CD8-positive, alpha-beta T cell (primary cell): ENCODE measurements at regions of chr6 and their contacts with region 1.

Region 1: DNA sequence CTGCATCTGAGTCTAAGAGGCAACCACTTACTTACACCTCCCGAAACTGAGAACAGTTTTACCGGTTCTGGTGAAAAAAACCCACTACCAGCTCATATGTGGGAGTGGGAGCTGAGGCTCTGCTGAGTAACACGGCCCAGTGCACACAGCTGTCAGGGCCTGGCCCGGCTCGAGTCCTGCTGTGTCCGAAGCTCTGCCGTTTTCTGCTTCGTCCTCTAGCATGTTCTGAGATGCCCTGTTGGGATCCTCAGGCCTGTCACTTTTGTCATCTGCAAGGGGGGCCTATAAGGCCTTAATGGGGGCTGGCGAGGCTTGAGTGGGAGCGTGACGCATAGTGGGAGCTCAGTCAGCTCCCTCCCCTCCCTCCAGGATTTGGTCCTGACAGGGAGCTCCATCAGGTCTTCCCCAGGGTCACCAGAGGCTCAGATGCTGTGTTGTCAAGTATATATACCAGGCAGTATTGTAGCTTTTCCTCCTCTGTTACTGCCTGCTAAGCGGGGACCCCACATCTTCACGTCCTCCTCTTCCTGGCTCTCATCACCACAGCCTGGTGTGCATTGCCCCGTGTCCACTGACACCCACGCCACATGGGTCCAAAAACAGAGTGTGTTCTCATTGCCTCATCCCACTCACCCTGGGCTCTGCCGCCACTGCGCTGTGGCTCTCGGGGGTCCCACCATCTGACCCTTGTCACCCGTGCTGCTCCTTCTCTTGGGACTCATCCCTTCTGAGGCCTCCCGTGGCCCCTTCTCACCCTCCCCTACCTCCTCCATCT is 45.2 kb upstream of the FANCE start:
- DNase-seq: no peak
- ATAC-seq: no peak
- H3K4me3 ChIP-seq: no peak overlapping the region
- H3K4me3 Mint-ChIP-seq: no peak overlapping the region
- H3K27ac ChIP-seq: no peak overlapping the region
- H3K27ac Mint-ChIP-seq: peak overlapping the region; percentile 57
- H3K4me1 ChIP-seq: peaks cover 20% of the 10 kb centered on the region
- H3K4me1 Mint-ChIP-seq: peaks cover 36% of the 10 kb centered on the region
- H3K27me3 ChIP-seq: no peaks in the 10 kb centered on the region
- H3K27me3 Mint-ChIP-seq: no peaks in the 10 kb centered on the region
- CTCF ChIP-seq: no peak

Region 2: DNA sequence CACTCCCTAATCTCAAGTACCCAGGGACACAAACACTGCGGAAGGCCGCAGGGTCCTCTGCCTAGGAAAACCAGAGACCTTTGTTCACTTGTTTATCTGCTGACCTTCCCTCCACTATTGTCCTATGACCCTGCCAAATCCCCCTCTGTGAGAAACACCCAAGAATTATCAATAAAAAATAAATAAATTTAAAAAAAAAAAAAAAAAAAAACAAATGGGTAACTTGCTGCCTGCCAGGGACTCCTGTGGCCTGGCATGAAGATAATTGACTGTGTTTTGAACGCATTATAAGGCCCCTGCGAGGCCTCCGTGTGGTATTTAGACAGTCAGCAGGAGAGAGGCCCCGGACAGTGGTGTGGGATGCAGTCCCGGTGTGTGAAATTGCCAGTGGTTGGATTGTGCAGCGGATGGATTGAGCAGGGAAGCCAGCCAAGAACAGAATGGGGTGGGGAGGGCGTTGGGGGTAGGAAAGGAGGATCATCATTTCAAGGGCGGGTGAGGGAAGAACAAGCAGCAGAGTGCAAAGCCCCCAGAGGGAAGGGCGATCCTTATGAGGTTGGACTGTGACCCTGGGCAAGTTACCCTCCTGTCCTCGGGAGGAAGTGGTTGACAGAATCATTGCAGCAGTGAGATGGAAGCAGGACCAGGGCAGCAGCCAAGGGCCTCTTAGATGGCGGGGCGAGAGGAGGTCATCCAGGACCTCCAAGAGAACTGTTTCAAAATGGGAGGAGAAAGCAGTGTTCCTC is 21.3 kb before region 1 on chr6:
- CTCF ChIA-PET with region 1: no interaction called
- POLR2A ChIA-PET with region 1: no interaction called
- intact Hi-C with region 1: no loop called
- DNase-seq: no peak
- ATAC-seq: no peak
- H3K4me3 ChIP-seq: no peak overlapping the region
- H3K4me3 Mint-ChIP-seq: no peak overlapping the region
- H3K27ac ChIP-seq: no peak overlapping the region
- H3K27ac Mint-ChIP-seq: peak overlapping the region; percentile 60
- H3K4me1 ChIP-seq: peaks cover 13% of the 10 kb centered on the region
- H3K4me1 Mint-ChIP-seq: peaks cover 35% of the 10 kb centered on the region
- H3K27me3 ChIP-seq: no peaks in the 10 kb centered on the region
- H3K27me3 Mint-ChIP-seq: no peaks in the 10 kb centered on the region
- CTCF ChIP-seq: no peak

Region 3: DNA sequence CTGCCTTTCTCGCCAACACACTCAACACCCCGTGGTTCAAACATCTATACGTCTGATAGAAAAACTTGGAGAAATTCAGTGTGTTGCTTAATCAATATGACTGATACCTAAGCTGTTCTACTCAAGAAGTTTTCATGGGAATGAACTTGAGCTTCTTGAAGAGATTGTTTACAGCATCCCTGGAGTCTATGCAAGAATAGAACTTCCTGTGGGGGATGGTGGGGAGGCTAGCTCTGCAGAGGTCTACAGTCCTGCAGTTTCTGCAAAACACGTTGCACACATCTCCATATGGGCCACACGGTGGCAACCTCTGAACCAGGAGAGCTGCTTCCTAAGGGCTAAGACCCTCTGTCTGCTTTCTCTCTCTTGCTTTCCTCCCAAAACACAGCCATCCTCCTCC is 12.5 kb after region 1 on chr6:
- CTCF ChIA-PET with region 1: interaction called, 25 read pairs
- POLR2A ChIA-PET with region 1: no interaction called
- intact Hi-C with region 1: no loop called
- DNase-seq: peak in 3 of 9 experiments; percentile 21 to 57 (median 43)
- ATAC-seq: peak; percentile 56
- H3K4me3 ChIP-seq: no peak overlapping the region
- H3K4me3 Mint-ChIP-seq: peak overlapping the region; percentile 35
- H3K27ac ChIP-seq: peak overlapping the region in 1 of 2 experiments; percentile 21
- H3K27ac Mint-ChIP-seq: peak overlapping the region; percentile 74
- H3K4me1 ChIP-seq: peaks cover 30% of the 10 kb centered on the region
- H3K4me1 Mint-ChIP-seq: peaks cover 31% of the 10 kb centered on the region
- H3K27me3 ChIP-seq: no peaks in the 10 kb centered on the region
- H3K27me3 Mint-ChIP-seq: no peaks in the 10 kb centered on the region
- CTCF ChIP-seq: no peak

Region 4: DNA sequence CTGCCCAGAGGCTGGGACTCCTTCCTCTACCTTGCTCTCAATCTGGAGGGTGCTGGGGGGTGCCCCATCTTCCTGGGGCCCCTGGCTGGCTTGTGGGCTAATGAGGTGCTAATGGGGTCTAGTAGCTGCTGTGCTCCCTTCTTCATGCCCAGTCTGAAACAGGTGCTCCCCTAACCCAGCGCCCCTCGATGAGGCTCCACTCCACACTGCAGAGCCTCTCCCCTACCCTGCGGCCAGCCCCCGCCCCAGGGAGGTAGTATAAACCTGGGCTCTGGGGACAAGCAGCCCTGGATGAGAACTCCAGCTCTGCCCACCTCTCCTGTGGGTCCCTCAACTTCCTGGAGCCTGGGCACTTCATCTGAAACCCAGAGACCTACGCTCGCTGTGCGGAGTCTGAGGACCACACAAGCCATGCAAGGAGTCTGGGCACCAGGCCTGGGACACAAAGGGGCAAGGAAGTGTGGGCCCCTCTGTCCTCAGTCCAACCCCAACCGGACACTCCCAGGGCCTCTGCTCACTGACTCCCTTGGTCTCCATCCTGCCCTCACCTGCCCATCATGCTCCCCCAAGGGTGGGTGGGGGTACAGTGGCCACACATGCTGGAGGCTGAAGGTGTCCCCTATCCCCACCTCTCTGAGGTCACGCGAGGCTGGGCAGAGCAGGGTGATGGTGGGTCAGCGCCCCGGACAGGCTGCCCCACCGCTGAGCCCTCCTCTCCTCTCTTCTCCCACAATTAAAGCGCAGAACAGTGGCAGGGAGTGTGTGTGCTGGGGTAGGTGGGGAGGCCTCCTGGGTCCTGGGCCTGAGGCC is 67.4 kb after region 1 on chr6:
- CTCF ChIA-PET with region 1: no interaction called
- POLR2A ChIA-PET with region 1: no interaction called
- intact Hi-C with region 1: no loop called
- DNase-seq: peak in 1 of 9 experiments; percentile 10
- ATAC-seq: no peak
- H3K4me3 ChIP-seq: no peak overlapping the region
- H3K4me3 Mint-ChIP-seq: no peak overlapping the region
- H3K27ac ChIP-seq: no peak overlapping the region
- H3K27ac Mint-ChIP-seq: no peak overlapping the region
- H3K4me1 ChIP-seq: peaks cover 18% of the 10 kb centered on the region
- H3K4me1 Mint-ChIP-seq: peaks cover 31% of the 10 kb centered on the region
- H3K27me3 ChIP-seq: no peaks in the 10 kb centered on the region
- H3K27me3 Mint-ChIP-seq: no peaks in the 10 kb centered on the region
- CTCF ChIP-seq: no peak

Region 5: DNA sequence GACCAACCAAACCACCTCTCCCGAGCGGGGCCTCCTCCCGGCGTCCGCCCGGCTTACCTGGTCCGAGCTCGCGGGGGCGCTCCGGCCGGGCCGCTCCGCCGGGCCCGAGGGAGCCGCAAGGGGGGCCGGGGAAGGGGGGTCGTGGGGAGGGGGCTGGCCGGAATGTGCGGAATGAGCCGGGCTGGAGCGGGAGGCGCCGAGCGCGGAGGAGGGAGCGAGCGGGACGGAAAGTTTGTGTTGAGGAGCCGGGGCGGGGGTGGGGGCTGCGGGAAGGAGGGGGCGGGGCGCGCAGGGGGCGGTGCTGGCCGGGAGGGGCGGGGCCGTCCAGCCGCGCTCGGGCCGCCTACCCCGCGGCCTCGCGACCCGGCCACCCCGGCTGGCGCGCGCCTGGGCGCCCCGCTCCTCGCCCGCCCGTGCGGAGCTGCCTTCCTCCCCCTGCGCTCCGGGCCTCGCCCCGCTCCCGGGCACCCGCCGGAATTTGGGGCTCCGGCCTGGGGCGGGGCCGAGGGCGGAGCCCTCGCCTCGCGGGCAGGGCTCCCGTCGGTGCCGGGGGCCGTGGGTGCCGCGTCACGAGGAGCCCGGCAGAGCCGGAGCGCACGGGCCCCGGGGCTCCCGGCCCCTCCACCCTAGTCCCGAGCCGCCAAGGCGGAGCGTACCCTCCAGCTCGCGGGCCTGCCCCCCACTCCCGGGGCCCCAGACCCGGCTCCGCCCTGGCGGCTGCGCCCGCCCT is 90.1 kb after region 1 on chr6 and contains the start of gene TEAD3:
- CTCF ChIA-PET with region 1: no interaction called
- POLR2A ChIA-PET with region 1: no interaction called
- intact Hi-C with region 1: no loop called
- DNase-seq: peak in 8 of 9 experiments; percentile 10 to 73 (median 39)
- ATAC-seq: peak; percentile 72
- H3K4me3 ChIP-seq: peak within 1 kb of the TSS; percentile 55 to 65
- H3K4me3 Mint-ChIP-seq: peak within 1 kb of the TSS; percentile 80
- H3K27ac ChIP-seq: no peak within 1 kb of the TSS
- H3K27ac Mint-ChIP-seq: no peak within 1 kb of the TSS
- H3K4me1 ChIP-seq: peaks cover 11% of the 10 kb centered on the region
- H3K4me1 Mint-ChIP-seq: peaks cover 17% of the 10 kb centered on the region
- H3K27me3 ChIP-seq: peaks cover 0 to 8% of the 10 kb centered on the region in 2 experiments
- H3K27me3 Mint-ChIP-seq: peaks cover 21% of the 10 kb centered on the region
- CTCF ChIP-seq: no peak
- total RNA-seq, gene TEAD3: not detected